Activated naive CD4-positive, alpha-beta T cell treated with anti-CD3 and anti-CD28 coated beads for 36 hours (primary cell): ENCODE measurements at regions of chr15 and their contacts with region 1.

Region 1: DNA sequence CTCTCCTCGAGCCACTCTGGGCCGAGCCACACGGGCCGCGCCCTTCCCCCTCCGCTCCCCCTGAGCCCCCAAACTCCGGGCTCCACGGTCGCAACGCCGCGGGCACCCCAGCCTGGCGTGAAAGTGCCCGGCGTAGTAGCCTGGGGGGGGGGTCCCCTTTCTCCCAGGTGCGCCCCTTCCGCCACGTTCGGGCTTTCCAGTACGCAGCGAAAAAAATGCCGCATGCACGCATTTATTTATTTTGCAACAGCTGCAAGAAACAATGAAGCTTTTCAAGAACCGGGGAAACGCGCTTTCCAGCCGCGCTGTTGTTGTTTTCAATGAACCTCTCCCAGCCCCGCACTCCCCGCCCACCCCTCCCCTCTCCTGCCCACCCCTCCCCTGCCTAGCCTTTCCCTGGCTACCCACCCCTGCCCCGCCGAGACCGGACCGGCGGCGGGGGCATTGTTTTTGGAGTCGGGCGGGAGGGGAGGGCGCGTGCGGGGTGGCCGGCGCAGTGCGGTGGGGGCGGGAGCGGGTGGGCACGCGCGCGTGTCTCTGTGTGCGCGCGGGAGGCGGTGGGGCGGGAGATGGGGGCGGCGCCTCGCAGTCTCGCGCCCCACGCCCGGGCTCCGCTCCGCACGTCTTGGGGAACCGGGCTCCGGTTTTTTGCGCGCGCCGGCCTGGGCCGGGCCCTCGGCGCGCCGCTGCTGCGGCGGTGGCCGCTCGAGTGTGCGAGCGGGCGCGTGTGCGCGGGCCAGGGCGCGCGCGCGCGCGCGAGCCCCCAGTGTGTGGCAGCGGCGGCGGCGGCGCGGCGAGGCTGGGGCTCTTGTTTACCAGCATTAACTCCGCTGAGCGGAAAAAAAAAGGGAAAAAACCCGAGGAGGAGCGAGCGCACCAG is at the start of gene IGF1R:
- DNase-seq: peak; percentile 85
- H3K4me3 Mint-ChIP-seq: peak within 1 kb of the TSS; percentile 87
- H3K27ac Mint-ChIP-seq: peak within 1 kb of the TSS; percentile 94
- H3K4me1 Mint-ChIP-seq: peaks cover 25% of the 10 kb centered on the region
- H3K27me3 Mint-ChIP-seq: no peaks in the 10 kb centered on the region
- total RNA-seq, gene IGF1R: 25.6 to 26.6 TPM

Region 2: DNA sequence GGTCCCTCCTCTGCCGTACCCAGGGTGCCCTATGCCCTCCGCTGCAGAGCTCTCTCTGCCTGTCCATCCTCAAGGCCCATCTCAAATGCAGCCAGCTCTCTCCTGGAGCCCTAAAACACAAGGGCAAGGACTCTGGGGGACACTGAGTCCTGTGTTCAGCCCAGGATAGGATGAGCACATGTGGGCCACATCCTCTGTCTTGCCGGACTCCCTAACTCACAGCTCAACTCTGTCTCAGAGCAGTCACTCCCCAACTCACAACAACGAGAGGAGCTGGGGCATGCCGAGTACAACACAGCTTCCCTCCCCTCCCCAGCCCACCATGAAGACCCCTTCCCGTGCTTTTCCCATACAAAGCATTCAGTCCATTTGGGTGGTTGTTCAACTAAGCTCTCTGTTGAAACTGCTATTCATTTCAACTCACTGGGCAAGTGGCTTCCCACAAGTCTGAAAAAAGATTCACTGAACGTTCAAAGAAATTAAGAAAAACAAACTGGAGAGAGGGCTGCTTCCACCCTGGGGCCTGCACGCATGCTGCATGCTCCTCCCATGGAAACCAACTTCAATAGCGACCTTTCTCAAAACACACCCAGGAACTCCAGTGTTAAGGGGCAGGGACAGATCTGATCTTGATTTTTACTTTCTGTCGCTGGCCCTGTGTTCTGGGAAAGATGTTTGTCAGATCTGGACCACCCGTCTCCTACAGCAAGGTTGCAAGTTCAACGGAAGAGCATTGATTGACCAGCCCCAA is 123.9 kb before region 1 on chr15:
- CTCF ChIA-PET with region 1: interaction called, 25 read pairs
- intact Hi-C with region 1: loop called (anchors 1 kb)
- DNase-seq: no peak
- H3K4me3 Mint-ChIP-seq: no peak overlapping the region
- H3K27ac Mint-ChIP-seq: no peak overlapping the region
- H3K4me1 Mint-ChIP-seq: peaks cover 2% of the 10 kb centered on the region
- H3K27me3 Mint-ChIP-seq: peaks cover 4% of the 10 kb centered on the region

Region 3: DNA sequence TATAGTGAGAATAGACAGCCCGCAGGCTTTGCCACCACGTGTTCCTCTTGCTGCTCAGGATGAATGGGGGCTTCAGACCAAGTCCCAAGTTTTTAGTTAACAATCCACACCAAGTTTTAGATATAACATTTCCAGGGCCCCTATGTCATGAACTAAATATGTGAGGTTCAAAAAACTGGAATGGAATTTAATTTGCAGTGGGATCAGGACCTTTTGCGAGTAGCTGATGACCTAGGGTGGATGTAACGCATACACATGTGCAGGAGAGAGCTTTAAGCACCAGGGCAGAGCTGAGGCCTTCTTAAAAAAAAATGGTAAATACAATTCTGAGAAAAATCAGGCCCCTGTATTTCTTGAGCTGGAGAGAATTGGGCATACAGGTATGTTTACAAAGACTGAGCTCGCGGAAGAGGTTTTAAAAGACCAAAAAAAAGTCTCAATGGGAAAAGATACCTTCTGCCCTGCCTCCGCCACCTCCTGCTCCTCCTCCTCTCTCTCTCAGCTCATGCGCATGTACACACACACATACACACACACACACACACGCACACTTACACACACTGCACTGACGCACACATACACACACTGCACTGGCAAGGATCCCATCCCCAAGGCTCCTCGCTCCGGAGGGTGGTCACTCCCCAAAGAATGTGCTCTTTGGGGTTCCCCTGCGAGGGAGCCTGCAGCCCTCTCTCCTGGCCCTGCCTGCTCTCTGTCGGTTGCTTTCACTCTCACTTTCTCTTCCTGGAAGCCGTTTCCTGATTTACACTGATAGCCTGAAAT is 47.9 kb before region 1 on chr15:
- CTCF ChIA-PET with region 1: interaction called, 4 read pairs
- intact Hi-C with region 1: loop called (anchors 1 kb)
- DNase-seq: peak; percentile 70
- H3K4me3 Mint-ChIP-seq: peak overlapping the region; percentile 94
- H3K27ac Mint-ChIP-seq: peak overlapping the region; percentile 97
- H3K4me1 Mint-ChIP-seq: peaks cover 20% of the 10 kb centered on the region
- H3K27me3 Mint-ChIP-seq: no peaks in the 10 kb centered on the region

Region 4: DNA sequence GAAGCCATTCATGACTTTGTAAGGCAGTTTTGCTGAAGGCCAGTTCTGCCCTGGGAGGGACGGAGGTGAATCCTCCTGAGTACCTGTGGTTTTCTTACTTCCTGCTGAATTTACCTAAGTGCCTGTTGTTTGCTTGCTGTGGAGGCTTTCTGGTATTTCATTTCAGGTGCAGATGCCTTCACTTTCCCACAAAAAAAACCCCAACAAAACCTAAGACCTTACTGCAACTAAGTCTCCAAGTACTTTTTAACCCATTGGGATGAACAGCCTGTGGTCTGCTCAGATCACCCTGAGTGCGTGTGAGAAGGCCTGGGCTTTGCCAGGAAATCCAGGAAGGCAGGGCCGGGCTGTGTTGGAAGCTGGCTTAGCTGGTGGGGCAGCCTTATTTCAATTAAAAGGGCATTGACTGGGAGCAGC is 65.6 kb after region 1 on chr15:
- CTCF ChIA-PET with region 1: no interaction called
- intact Hi-C with region 1: loop called (anchors 2 kb)
- DNase-seq: peak; percentile 43
- H3K4me3 Mint-ChIP-seq: no peak overlapping the region
- H3K27ac Mint-ChIP-seq: peak overlapping the region; percentile 57
- H3K4me1 Mint-ChIP-seq: peaks cover 61% of the 10 kb centered on the region
- H3K27me3 Mint-ChIP-seq: no peaks in the 10 kb centered on the region

Region 5: DNA sequence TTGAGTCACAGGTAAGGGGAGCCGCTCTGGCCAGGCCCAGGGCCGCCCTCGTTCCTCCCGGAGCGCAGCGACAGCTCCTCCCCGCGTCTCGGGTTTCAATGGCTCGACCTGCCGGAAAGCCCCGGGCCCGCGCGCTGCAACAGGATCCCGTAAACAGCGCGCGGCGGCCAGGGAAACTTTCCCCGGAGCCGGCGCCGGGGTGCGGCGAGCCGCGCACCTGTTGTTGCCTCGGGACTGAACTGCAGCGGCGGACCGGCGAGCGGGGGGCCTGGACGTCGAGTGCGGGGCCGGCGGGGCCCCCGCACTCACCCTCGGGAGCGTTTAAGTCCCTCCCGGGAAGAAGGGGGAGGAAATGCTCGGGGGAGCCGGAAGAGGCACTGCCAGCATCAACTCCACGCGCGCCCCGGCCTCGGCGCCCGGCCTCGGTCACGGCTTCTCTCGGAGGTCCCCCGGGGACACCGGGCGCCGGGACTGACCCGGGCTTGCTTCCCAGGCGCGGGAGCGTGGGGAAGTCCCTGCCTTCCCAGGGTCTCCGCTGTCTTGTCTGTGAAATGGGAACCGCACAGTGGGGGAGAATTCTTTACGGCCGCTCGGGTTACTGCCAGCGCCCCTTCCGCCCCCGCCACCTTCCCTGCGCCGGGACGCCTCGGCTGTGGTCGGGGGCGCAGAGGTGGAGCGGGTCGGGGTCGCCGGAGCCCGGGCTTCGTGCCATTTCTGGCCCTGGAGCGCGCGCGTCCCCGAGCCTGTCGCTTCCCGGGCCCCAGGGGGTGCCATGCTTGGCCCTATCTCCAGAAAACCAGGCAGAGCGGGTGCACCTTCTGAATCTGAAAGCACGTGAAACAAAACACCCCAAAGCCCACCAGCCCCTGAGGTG is 367.0 kb after region 1 on chr15:
- CTCF ChIA-PET with region 1: no interaction called
- intact Hi-C with region 1: loop called (anchors 2 kb)
- DNase-seq: peak; percentile 85
- H3K4me3 Mint-ChIP-seq: peak overlapping the region; percentile 64
- H3K27ac Mint-ChIP-seq: no peak overlapping the region
- H3K4me1 Mint-ChIP-seq: peaks cover 2% of the 10 kb centered on the region
- H3K27me3 Mint-ChIP-seq: peaks cover 33% of the 10 kb centered on the region

Region 6: GRCh38 chr15:99250494-99251435 is 602.8 kb after region 1 on chr15:
- CTCF ChIA-PET with region 1: no interaction called
- intact Hi-C with region 1: loop called (anchors 5 kb)
- DNase-seq: peak; percentile 99
- H3K4me3 Mint-ChIP-seq: peak overlapping the region; percentile 93
- H3K27ac Mint-ChIP-seq: peak overlapping the region; percentile 87
- H3K4me1 Mint-ChIP-seq: peaks cover 28% of the 10 kb centered on the region
- H3K27me3 Mint-ChIP-seq: no peaks in the 10 kb centered on the region